Activated CD4-positive, alpha-beta memory T cell treated with anti-CD3 and anti-CD28 coated beads, Interleukin-2, amount 10 ng/mL, durations not matched to agents 7 days and 5 days (primary cell): ENCODE measurements at regions of chr12 and their contacts with region 1.

Region 1: GRCh38 chr12:68482660-68483059 is 128.0 kb upstream of the RAP1B start:
- DNase-seq: peak; percentile 73
- H3K4me3 Mint-ChIP-seq: peak overlapping the region; percentile 42
- H3K27ac Mint-ChIP-seq: peak overlapping the region; percentile 90
- H3K4me1 Mint-ChIP-seq: peaks cover 69% of the 10 kb centered on the region
- H3K27me3 Mint-ChIP-seq: no peaks in the 10 kb centered on the region

Region 2: GRCh38 chr12:68206446-68206845 is 276.2 kb before region 1 on chr12:
- CTCF ChIA-PET with region 1: no interaction called
- POLR2A ChIA-PET with region 1: no interaction called
- DNase-seq: no peak
- H3K4me3 Mint-ChIP-seq: no peak overlapping the region
- H3K27ac Mint-ChIP-seq: no peak overlapping the region
- H3K4me1 Mint-ChIP-seq: peaks cover 25% of the 10 kb centered on the region
- H3K27me3 Mint-ChIP-seq: peaks cover 31% of the 10 kb centered on the region

Region 3: DNA sequence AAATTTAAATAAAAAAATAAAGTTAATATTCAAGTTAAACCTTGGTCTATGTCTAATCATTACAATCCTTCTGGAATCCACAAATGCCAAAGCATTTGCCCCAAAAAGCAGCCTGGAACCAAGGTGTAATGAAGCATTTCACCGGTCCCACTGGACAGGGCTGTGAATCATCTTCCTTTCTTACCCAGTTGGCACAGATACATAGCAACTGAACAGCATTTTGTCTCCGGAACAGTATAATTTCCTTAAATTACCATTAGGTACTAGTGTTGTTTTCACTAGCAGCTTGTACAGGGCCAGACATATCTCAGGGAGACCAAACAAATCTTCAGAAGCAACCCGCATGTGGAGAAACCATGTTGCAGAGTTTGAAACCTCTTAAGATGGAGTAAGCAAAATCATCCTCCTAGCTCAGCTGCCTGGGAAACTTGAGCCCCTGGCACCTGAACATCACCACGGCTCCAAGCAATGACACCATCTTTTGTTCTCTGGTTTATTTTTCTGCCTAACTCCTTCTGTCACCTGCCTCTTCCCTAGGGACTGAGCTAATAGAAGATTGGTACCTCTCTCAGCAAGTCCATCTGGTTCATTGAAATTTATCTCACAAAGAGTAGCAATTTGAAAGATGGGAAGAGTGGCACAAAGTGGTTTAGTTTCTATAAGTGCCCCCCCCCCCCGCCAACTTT is 132.6 kb before region 1 on chr12:
- CTCF ChIA-PET with region 1: no interaction called
- POLR2A ChIA-PET with region 1: no interaction called
- DNase-seq: no peak
- H3K4me3 Mint-ChIP-seq: no peak overlapping the region
- H3K27ac Mint-ChIP-seq: no peak overlapping the region
- H3K4me1 Mint-ChIP-seq: peaks cover 16% of the 10 kb centered on the region
- H3K27me3 Mint-ChIP-seq: peaks cover 2% of the 10 kb centered on the region

Region 4: DNA sequence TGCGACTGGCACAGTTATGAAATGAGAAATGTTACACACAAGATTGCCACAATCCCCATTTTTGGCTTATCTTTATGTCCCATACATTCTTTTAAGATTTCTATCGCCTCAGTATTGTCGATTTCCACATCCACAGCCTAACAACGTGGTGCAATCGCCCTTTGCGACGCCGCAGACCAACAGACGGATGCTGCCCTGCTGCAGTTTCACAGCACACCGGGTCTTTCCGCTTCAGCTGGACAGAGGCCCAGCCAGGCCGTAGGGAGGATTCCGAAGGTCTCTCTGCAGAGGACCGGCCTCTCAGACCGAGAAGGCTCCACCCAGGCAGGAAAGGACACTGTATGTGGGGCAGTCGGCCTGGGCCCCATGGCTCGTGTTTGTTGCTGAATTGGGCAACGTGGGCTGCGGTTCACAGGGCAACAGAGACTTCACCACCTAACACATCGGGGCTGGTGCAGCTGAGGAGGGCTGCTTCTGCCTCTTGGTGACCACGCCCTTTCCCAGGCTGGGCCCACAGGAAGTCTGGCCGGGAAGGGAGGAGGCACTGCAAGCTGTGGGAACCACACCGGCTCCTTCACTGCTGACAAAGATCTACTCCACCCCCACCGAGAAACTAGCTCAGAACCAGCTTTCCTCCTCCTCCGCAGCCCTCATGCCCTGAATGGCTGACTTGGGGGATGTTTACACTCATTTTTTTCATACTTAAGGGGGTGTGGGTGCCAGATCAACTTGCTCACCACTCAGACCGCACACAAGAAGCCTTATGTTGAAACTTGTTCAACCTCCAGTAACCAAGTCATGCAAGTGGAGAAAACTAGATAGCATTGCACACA is 117.6 kb before region 1 on chr12:
- CTCF ChIA-PET with region 1: interaction called, 11 read pairs
- POLR2A ChIA-PET with region 1: interaction called, 27 read pairs
- DNase-seq: peak; percentile 95
- H3K4me3 Mint-ChIP-seq: peak overlapping the region; percentile 73
- H3K27ac Mint-ChIP-seq: peak overlapping the region; percentile 96
- H3K4me1 Mint-ChIP-seq: peaks cover 68% of the 10 kb centered on the region
- H3K27me3 Mint-ChIP-seq: no peaks in the 10 kb centered on the region

Region 5: DNA sequence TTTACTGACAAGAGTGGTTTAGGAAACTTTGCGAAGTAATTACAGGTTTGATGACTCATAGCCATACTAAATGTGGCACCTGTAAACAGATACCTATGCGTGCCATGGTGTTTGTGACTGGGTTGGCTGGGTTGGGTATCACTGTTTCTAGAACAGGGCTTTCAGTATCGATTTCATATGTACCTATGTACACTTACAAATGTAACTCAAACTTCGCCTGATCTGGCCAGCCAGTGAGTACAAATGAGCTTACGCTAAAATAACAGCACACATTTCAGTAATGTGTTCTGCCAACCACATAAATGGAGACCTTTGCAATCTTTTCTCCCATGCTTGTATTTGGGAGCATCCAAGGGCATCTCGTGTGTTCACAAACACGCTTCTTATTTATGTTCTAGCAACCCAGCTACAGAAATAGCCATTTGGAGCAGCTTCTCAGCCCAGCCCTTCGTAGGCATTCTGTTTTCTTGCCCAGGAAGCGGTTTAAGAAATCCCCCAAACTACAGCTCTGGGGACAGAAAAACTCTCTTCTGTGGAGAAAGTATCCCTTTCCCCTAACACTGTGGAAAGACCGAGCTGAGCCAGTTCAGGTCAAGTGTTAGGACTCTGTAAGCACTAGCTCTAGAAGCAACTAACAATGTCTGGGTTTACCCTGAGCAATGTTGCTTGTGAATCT is 108.2 kb before region 1 on chr12:
- CTCF ChIA-PET with region 1: interaction called, 3 read pairs
- POLR2A ChIA-PET with region 1: interaction called, 58 read pairs
- DNase-seq: peak; percentile 82
- H3K4me3 Mint-ChIP-seq: peak overlapping the region; percentile 46
- H3K27ac Mint-ChIP-seq: peak overlapping the region; percentile 96
- H3K4me1 Mint-ChIP-seq: peaks cover 61% of the 10 kb centered on the region
- H3K27me3 Mint-ChIP-seq: no peaks in the 10 kb centered on the region

Region 6: GRCh38 chr12:68451261-68452077 is 31.2 kb before region 1 on chr12:
- CTCF ChIA-PET with region 1: interaction called, 6 read pairs
- POLR2A ChIA-PET with region 1: interaction called, 100 read pairs
- DNase-seq: peak; percentile 64
- H3K4me3 Mint-ChIP-seq: peak overlapping the region; percentile 67
- H3K27ac Mint-ChIP-seq: peak overlapping the region; percentile 96
- H3K4me1 Mint-ChIP-seq: peaks cover 93% of the 10 kb centered on the region
- H3K27me3 Mint-ChIP-seq: no peaks in the 10 kb centered on the region

Region 7: GRCh38 chr12:68462803-68463202 is 19.9 kb before region 1 on chr12:
- CTCF ChIA-PET with region 1: interaction called, 3 read pairs
- POLR2A ChIA-PET with region 1: interaction called, 10 read pairs
- DNase-seq: no peak
- H3K4me3 Mint-ChIP-seq: peak overlapping the region; percentile 76
- H3K27ac Mint-ChIP-seq: peak overlapping the region; percentile 79
- H3K4me1 Mint-ChIP-seq: peaks cover 24% of the 10 kb centered on the region
- H3K27me3 Mint-ChIP-seq: no peaks in the 10 kb centered on the region

Region 8: GRCh38 chr12:68497702-68498101 is 15.0 kb after region 1 on chr12:
- CTCF ChIA-PET with region 1: interaction called, 3 read pairs
- POLR2A ChIA-PET with region 1: interaction called, 54 read pairs
- DNase-seq: no peak
- H3K4me3 Mint-ChIP-seq: peak overlapping the region; percentile 58
- H3K27ac Mint-ChIP-seq: peak overlapping the region; percentile 88
- H3K4me1 Mint-ChIP-seq: peaks cover 41% of the 10 kb centered on the region
- H3K27me3 Mint-ChIP-seq: no peaks in the 10 kb centered on the region

Region 9: DNA sequence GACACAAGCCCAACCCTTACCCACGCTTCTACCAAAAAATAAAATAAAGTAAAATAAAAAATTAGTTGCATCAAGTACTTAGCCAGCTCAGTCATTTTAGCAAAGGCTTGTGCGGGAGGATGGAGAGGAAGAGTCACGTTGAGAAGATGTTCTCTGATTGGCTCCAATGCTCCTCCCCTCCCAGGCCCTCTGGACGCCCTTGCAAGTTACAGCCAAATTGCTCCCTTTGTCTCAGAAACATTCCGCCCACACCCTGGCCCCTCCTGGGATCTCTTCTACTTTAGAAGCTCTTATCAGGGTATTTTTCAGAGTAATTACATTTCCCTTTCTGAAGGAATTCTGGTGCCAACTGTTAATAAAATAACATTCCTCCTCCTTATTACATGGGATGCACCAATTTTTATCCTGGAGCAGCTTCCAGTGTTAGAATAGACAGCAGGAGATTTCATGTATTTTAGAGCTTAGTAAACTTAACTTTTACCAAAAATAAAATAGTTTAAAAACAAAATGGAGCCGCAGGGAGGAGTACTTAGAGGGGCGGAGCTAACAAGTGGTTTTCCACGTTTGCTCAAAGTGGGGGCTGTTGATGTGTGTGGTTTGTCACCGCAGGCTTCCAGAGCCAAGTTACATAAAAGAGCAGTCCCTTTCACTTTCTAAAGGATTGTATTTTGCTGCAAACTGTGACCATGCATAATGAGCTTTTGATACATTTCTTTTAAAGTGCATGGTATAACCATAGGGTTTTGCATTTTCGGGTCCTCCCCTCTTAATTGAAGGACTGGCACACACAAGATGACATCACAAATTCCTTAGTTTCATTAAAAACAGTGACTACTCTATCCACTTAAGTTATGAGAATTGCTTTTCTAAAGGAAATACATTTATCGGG is 56.3 kb after region 1 on chr12:
- CTCF ChIA-PET with region 1: no interaction called
- POLR2A ChIA-PET with region 1: interaction called, 13 read pairs
- DNase-seq: peak; percentile 65
- H3K4me3 Mint-ChIP-seq: no peak overlapping the region
- H3K27ac Mint-ChIP-seq: no peak overlapping the region
- H3K4me1 Mint-ChIP-seq: peaks cover 43% of the 10 kb centered on the region
- H3K27me3 Mint-ChIP-seq: no peaks in the 10 kb centered on the region